ENCODE measurements at regions of chr3 and their contacts with region 1.

Region 1: GRCh38 chr3:108552267-108553159 is 36.7 kb downstream of the CIP2A start:
- DNase-seq: peak in 1 of 2 donors; percentile 21
- ATAC-seq: peak in 6 of 8 donors; percentile 48 to 75 (median 60)
- H3K4me3 ChIP-seq: peak overlapping the region in 1 of 10 donors; percentile 15
- H3K27ac ChIP-seq: no peak overlapping the region
- H3K4me1 ChIP-seq: peaks cover 0 to 24% (median 0%) of the 10 kb centered on the region in 9 donors
- H3K27me3 ChIP-seq: no peaks in the 10 kb centered on the region
- CTCF ChIP-seq: peak in 8 of 9 donors; percentile 23 to 76 (median 62)

Region 2: GRCh38 chr3:108489771-108490170 is 62.7 kb before region 1 on chr3:
- intact Hi-C with region 1: loop called (anchors 1 to 5 kb)
- DNase-seq: peak in 1 of 2 donors; percentile 15
- ATAC-seq: peak in 6 of 8 donors; percentile 41 to 74 (median 52)
- H3K4me3 ChIP-seq: no peak overlapping the region
- H3K27ac ChIP-seq: no peak overlapping the region
- H3K4me1 ChIP-seq: peaks cover 0 to 13% (median 3%) of the 10 kb centered on the region in 9 donors
- H3K27me3 ChIP-seq: no peaks in the 10 kb centered on the region
- CTCF ChIP-seq: peak; percentile 55 to 83 (median 77)

Region 3: GRCh38 chr3:108513961-108514360 is 38.6 kb before region 1 on chr3:
- intact Hi-C with region 1: loop called in 2 of 10 experiments (anchors 5 kb)
- DNase-seq: no peak
- ATAC-seq: no peak
- H3K4me3 ChIP-seq: no peak overlapping the region
- H3K27ac ChIP-seq: no peak overlapping the region
- H3K4me1 ChIP-seq: peaks cover 0 to 9% (median 0%) of the 10 kb centered on the region in 9 donors
- H3K27me3 ChIP-seq: no peaks in the 10 kb centered on the region
- CTCF ChIP-seq: no peak

Measured in heart right ventricle (tissue), 16 donors.